ENCODE measurements at regions of chr17 and their contacts with region 1.

Region 1: GRCh38 chr17:38421171-38421841 is 7.0 kb upstream of the ARHGAP23 start:
- DNase-seq: no peak
- H3K4me3 ChIP-seq: no peak overlapping the region
- H3K27ac ChIP-seq: no peak overlapping the region
- H3K4me1 ChIP-seq: peaks cover 38% of the 10 kb centered on the region
- H3K27me3 ChIP-seq: no peaks in the 10 kb centered on the region
- CTCF ChIP-seq: no peak
- POLR2A ChIP-seq: no peak

Region 2: DNA sequence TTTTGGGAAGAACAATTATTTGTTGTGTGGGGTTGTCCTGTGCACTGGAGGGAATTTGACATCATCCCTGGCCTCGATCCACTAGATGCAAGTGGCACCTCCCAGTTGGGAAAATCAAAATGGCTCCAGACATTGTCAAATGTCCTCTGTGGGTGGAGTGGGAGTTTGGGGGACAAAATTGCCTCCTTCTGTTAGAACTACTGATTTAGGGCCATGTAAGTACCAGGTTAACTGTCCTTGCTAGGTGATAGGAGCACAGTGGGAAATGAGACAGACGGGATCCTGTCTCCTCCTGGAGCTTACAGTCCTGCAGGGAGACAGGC is 63.8 kb after region 1 on chr17:
- intact Hi-C with region 1: loop called (anchors 5 kb)
- DNase-seq: no peak
- H3K4me3 ChIP-seq: no peak overlapping the region
- H3K27ac ChIP-seq: no peak overlapping the region
- H3K4me1 ChIP-seq: peaks cover 8% of the 10 kb centered on the region
- H3K27me3 ChIP-seq: no peaks in the 10 kb centered on the region
- CTCF ChIP-seq: no peak
- POLR2A ChIP-seq: no peak

Measured in testis (tissue), 5 donors.